AG04450 (cell line): ENCODE measurements at regions of chr4 and their contacts with region 1.

Region 1: GRCh38 chr4:80202190-80202711 is 4.9 kb downstream of the PRDM8 start:
- DNase-seq: no peak
- H3K4me3 ChIP-seq: peak overlapping the region; percentile 63
- H3K27ac ChIP-seq: peak overlapping the region; percentile 90
- H3K27me3 ChIP-seq: no peaks in the 10 kb centered on the region
- CTCF ChIP-seq: peak; percentile 66

Region 2: DNA sequence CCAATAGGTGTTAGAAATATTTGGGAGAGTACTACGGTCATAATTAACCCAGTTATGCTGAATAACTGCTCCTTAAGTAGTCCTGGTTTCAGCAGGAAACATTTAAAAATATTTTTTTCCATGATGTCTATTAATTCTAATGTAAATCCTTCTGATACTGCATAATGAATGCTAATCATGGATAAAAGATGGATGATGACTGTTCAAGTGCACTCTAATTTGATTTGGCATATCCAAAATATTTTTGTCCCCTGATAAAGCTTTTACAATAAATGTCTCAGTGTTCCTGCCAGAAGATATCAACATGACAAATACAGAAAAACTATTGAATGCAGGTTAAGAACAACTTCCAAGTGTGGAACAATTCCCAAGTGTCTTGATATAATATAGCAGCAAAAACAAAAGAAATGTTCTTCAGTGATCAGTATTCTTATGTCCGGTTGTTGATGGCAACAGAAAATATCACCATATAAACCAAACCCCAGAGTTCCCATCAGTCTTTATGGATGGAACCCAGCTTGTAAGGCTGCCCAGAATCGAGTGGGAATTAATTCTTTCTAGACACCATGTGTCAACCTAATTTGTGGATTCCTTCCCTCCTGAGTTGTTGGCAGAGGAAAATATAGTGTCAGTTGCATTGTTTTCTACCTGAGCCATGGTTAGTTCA is 588.8 kb before region 1 on chr4:
- CTCF ChIA-PET with region 1: interaction called, 10 read pairs
- POLR2A ChIA-PET with region 1: no interaction called
- DNase-seq: no peak
- H3K4me3 ChIP-seq: no peak overlapping the region
- H3K27ac ChIP-seq: no peak overlapping the region
- H3K27me3 ChIP-seq: no peaks in the 10 kb centered on the region
- CTCF ChIP-seq: no peak

Region 3: DNA sequence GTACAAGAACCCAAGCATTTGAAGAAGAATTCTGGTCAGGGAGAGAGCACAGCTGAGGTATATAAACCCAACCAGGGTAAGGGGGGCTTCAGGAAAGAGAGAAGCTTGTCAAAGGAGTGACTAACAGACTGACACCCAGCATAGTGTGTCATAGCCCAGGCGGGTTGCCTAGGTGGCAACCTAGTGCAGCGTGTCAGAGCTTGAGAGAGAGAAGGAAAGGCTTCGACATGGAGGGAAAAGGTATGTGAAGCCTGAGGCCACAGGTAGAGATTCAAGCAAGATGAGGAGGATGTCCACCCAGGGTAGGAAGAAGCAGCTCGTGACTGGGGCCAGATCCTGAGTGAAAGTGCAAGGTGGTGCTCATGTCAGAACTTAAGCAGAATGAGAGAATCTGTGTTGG is 120.7 kb before region 1 on chr4:
- CTCF ChIA-PET with region 1: no interaction called
- POLR2A ChIA-PET with region 1: no interaction called
- DNase-seq: no peak
- H3K4me3 ChIP-seq: no peak overlapping the region
- H3K27ac ChIP-seq: no peak overlapping the region
- H3K27me3 ChIP-seq: no peaks in the 10 kb centered on the region
- CTCF ChIP-seq: no peak

Region 4: GRCh38 chr4:80115368-80116181 is 86.7 kb before region 1 on chr4:
- CTCF ChIA-PET with region 1: no interaction called
- POLR2A ChIA-PET with region 1: no interaction called
- DNase-seq: no peak
- H3K4me3 ChIP-seq: no peak overlapping the region
- H3K27ac ChIP-seq: no peak overlapping the region
- H3K27me3 ChIP-seq: no peaks in the 10 kb centered on the region
- CTCF ChIP-seq: no peak

Region 5: DNA sequence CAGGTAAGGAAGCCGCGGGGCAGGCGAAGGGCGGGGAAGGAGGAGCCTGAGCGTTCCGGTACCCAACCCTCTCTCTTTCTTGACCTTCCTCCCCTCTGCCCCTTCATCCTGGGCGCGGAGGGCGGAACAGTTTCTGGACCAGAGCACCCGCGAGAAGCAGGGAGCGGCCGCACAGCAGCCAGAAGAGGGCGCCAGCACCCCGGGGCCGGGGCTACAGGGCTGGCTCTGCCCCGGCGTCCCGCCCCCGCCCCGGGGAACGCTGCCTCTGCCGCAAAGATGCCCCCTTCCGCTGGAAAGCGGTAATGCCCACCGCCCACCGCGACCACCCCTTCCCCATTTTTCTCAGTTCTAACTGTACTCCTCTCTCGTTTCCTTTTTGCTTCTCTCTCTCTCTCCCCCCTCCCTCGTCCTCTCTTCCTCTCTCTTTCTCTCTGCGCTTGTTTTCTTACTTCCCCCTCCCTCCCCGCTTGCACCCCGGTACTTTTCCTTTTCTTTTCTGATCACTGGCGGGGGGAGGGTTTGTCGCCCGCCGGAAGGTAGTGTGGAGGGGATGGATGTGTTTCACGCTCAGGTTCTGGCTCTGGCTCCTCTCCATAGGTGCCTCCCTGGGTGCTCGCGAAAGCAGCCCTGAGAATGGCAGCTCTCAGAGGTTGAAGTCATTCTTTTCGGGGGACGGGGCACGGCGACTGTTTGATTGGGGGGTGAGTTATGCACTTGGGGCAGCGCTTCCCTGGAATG is 18.0 kb before region 1 on chr4:
- CTCF ChIA-PET with region 1: interaction called, 82 read pairs
- POLR2A ChIA-PET with region 1: interaction called, 8 read pairs
- DNase-seq: no peak
- H3K4me3 ChIP-seq: peak overlapping the region; percentile 90
- H3K27ac ChIP-seq: peak overlapping the region; percentile 61
- H3K27me3 ChIP-seq: no peaks in the 10 kb centered on the region
- CTCF ChIP-seq: peak; percentile 90

Region 6: DNA sequence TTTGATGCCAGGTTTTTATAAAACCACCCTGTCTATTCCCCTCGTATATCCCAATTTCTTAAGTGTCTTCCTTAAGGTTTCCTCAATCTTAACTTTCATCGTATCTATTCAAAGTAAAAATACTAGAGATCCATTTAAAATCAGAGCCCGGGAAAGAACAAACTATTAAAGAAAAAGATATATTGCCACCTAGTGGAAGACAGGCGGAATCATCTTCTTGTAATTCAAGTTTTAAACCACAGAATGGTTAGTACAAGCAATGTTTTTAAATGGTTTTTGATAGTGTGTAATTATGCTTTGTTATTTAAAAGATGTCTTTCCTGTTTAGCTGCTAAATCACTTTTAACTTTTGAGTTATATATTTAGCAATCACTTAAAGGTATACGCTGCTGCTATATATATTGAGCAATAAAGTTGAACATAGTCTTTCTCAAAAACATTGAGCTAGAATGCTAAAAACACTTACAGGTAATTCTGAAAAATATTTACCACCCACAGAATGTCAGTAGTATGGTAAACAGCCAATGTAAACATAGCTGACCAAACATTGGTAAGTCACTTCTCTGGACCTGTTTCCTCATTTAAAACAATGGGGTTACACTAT is 13.3 kb after region 1 on chr4:
- CTCF ChIA-PET with region 1: interaction called, 18 read pairs
- POLR2A ChIA-PET with region 1: interaction called, 7 read pairs
- DNase-seq: no peak
- H3K4me3 ChIP-seq: no peak overlapping the region
- H3K27ac ChIP-seq: no peak overlapping the region
- H3K27me3 ChIP-seq: no peaks in the 10 kb centered on the region
- CTCF ChIP-seq: peak; percentile 67

Region 7: GRCh38 chr4:80221161-80221560 is 18.9 kb after region 1 on chr4:
- CTCF ChIA-PET with region 1: interaction called, 13 read pairs
- POLR2A ChIA-PET with region 1: interaction called, 5 read pairs
- DNase-seq: no peak
- H3K4me3 ChIP-seq: no peak overlapping the region
- H3K27ac ChIP-seq: no peak overlapping the region
- H3K27me3 ChIP-seq: no peaks in the 10 kb centered on the region
- CTCF ChIP-seq: peak; percentile 56